Posterior vena cava (tissue), 2 donors: ENCODE measurements at regions of chr1 and their contacts with region 1.

Region 1: DNA sequence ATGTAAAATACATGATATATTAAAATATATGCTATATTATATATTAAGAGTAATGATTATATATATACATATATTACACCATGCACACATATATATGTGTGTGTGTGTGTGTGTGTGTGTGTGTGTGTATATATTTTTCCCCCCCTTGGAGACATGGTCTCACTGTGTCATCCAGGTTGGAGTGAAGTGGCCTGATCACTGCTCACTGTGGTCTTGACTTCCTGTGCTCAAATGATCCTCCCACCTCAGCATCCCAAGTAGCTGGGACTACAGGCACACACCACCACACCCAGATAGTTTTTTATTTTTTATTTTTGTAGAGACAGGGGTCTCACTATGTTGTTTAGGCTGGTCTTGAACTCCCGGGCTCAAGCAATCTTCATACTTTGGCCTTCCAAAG is 54.4 kb upstream of the RBM34 start:
- DNase-seq: no peak

Region 2: GRCh38 chr1:235122348-235122747 is 93.1 kb before region 1 on chr1:
- intact Hi-C with region 1: no loop called
- DNase-seq: no peak

Region 3: DNA sequence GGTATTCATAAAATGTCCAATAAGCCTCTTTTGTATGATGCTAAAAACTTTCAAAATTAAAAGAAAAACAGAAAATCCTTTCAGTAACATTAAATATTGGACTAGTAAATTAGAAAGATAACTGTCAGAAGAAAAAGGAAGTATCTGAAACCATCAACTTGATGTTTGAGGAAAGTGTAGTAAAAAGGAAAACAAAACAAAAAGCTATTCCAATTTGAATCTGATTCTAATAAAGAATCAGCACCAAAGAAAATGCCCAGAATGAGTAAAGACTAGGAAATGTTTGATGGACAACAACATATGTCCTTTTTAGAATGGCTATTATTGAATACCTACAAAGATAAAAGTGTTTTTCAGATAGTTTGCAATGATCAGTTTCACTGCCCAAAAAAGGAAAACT is 25.5 kb after region 1 on chr1:
- intact Hi-C with region 1: loop called in 1 of 2 experiments (anchors 1 kb)
- DNase-seq: no peak

Region 4: DNA sequence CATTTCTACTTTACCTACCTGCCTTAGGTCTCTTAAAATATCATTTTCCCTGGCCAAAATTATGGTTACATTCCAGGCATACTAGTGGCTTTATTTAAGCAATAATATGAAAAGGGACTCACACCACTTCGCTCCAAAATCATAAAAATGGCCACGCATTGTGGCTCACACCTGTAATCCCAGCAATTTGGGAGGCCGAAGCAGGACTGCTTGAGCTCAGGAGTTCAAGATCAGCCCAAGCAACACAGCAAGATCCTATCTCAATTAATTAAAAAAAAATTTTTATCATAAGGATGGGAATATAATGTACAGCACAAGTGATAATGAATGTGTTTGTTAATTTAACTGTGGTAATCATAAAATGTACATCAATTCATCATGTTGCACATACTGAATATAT is 47.1 kb after region 1 on chr1:
- intact Hi-C with region 1: loop called in 1 of 2 experiments (anchors 2 kb)
- DNase-seq: no peak